ENCODE measurements at regions of chr9 and their contacts with region 1.

Region 1: GRCh38 chr9:18442629-18443491 is 31.1 kb upstream of the ADAMTSL1 start:
- DNase-seq: peak; percentile 71
- H3K4me3 ChIP-seq: no peak overlapping the region
- H3K27ac ChIP-seq: no peak overlapping the region
- H3K27me3 ChIP-seq: no peaks in the 10 kb centered on the region
- CTCF ChIP-seq: peak; percentile 94

Region 2: GRCh38 chr9:18255158-18255629 is 187.7 kb before region 1 on chr9:
- CTCF ChIA-PET with region 1: interaction called, 137 read pairs
- POLR2A ChIA-PET with region 1: interaction called, 4 read pairs
- DNase-seq: peak; percentile 73
- H3K4me3 ChIP-seq: no peak overlapping the region
- H3K27ac ChIP-seq: no peak overlapping the region
- H3K27me3 ChIP-seq: no peaks in the 10 kb centered on the region
- CTCF ChIP-seq: peak; percentile 91

Region 3: DNA sequence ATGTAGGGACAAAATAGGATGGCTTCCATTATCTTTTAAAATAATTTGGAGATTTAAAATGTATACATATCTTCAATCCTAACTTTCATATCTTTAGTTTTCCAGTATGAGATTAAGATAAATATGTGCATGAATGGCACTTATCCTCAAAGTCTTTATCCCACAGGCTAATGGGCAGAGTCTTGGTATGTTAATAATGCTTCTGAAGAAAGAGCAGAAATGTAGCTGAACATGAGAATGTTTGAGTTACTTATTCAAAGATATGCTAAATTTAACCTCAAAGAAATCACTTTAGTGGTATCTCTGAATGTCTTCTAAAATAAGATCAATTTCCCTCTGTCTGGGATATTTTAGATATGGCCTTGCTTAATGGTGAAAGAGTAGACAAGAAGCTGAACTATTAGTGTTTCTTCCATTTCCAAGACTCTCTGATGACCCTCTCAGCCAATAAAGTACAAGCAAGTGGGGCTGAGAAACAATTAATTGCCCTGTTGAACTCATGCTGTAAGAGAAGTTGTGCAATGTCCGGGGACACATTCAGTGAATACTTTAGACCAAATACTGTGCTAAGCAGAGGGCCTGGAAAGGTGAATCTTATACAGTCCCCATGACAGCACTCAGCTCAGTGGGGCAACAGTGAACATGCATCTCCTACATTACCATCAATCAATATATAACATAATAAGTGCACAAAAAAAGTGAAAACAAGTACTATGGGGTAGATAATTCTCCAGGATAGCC is 18.9 kb before region 1 on chr9:
- CTCF ChIA-PET with region 1: interaction called, 38 read pairs
- POLR2A ChIA-PET with region 1: no interaction called
- DNase-seq: no peak
- H3K4me3 ChIP-seq: no peak overlapping the region
- H3K27ac ChIP-seq: no peak overlapping the region
- H3K27me3 ChIP-seq: no peaks in the 10 kb centered on the region
- CTCF ChIP-seq: no peak

Region 4: GRCh38 chr9:18459958-18460584 is 17.2 kb after region 1 on chr9:
- CTCF ChIA-PET with region 1: interaction called, 135 read pairs
- POLR2A ChIA-PET with region 1: no interaction called
- DNase-seq: no peak
- H3K4me3 ChIP-seq: no peak overlapping the region
- H3K27ac ChIP-seq: no peak overlapping the region
- H3K27me3 ChIP-seq: no peaks in the 10 kb centered on the region
- CTCF ChIP-seq: no peak

Region 5: GRCh38 chr9:18478501-18479361 is 35.9 kb after region 1 on chr9:
- CTCF ChIA-PET with region 1: interaction called, 41 read pairs
- POLR2A ChIA-PET with region 1: no interaction called
- DNase-seq: no peak
- H3K4me3 ChIP-seq: no peak overlapping the region
- H3K27ac ChIP-seq: peak overlapping the region; percentile 65
- H3K27me3 ChIP-seq: no peaks in the 10 kb centered on the region
- CTCF ChIP-seq: no peak

Region 6: DNA sequence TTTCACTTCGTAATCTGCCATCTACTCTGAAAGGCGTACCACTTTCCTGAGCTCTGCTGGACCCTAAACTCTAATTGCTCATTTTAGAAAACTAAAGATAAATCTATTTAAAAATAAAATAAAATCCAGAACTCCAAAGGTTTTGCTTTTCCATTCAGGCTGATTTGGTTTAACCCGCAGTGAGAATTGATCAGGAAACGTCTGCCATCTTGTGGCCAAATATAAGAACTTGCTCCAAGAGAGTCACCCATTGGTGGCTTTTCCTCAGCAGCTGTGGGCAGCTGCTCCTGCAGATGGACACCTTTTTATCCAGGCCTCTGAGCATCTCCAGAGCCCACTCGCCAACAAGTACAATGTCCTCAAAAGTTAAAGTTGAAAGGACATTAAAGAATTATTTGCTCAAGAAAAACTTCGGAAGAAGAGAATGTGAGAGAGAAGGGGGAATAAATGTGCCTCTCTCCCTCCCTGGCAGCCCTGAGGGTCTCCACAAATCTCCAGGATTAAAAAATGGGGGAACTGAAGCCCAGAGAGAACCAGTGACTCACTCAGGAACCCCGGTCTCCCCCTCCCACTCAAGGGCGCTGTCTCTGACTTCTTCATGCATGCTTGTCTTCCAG is 586.1 kb after region 1 on chr9:
- CTCF ChIA-PET with region 1: interaction called, 39 read pairs
- POLR2A ChIA-PET with region 1: no interaction called
- DNase-seq: peak; percentile 52
- H3K4me3 ChIP-seq: no peak overlapping the region
- H3K27ac ChIP-seq: no peak overlapping the region
- H3K27me3 ChIP-seq: peaks cover 2% of the 10 kb centered on the region
- CTCF ChIP-seq: peak; percentile 74